ENCODE measurements at regions of chr1 and their contacts with region 1.

Region 1: GRCh38 chr1:90721210-90722194 is 4.4 kb upstream of the BARHL2 start:
- DNase-seq: peak; percentile 67
- H3K4me3 Mint-ChIP-seq: no peak overlapping the region
- H3K27ac Mint-ChIP-seq: peak overlapping the region; percentile 27
- H3K4me1 Mint-ChIP-seq: peaks cover 44% of the 10 kb centered on the region
- H3K27me3 Mint-ChIP-seq: peaks cover 87% of the 10 kb centered on the region

Region 2: DNA sequence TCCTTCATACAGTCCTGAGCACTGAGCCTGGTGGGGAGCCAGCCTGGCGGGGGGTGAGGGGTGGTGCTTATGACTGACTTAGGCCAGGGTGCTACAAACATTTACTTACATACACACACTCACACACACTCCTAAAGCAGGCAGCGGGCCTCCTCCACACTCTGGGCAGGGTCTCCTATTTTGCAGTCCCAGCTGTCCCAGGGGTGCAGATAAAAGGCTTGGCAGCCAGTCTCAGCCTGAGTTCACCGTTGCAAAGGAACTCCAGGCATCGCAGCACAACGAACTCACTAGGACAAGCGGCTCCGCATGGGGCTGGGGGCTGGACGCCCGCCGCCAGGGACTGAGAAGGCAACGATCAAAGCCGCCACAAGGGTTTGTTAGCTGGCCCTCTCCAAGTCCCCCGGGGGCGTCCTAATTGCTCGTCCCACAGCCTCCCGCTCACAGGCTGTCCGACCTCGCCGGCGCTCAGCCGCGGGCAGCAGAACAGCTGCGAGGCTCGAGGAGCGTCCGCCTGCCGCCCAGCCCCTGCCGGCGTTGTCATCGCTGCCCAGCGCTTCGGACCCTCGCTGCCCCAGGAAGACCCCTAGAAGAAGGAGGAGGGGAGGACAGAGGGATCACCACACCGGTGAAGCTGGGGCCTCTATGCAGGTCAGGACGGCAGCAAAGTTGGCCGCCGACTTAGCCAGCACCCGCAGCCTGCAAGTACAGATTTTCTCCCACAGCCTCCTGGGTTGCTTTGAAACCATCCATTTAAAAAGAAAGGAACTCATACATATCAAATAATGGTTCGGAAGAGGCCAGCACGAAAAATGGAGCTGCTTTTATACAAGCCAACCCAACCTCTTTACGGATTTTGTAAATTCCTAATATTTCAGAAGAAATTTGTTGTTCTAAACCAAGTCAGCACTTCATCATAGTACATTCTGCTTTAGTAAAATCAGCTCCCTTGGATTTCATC is 10.6 kb before region 1 on chr1:
- CTCF ChIA-PET with region 1: interaction called, 15 read pairs
- POLR2A ChIA-PET with region 1: interaction called, 3 read pairs
- DNase-seq: no peak
- H3K4me3 Mint-ChIP-seq: no peak overlapping the region
- H3K27ac Mint-ChIP-seq: no peak overlapping the region
- H3K4me1 Mint-ChIP-seq: peaks cover 3% of the 10 kb centered on the region
- H3K27me3 Mint-ChIP-seq: peaks cover 89% of the 10 kb centered on the region